Left cardiac atrium (tissue), 4 donors: ENCODE measurements at regions of chr15 and their contacts with region 1.

Region 1: GRCh38 chr15:41387646-41388045 is 14.7 kb downstream of the NDUFAF1 start:
- DNase-seq: no peak
- ATAC-seq: no peak

Region 2: DNA sequence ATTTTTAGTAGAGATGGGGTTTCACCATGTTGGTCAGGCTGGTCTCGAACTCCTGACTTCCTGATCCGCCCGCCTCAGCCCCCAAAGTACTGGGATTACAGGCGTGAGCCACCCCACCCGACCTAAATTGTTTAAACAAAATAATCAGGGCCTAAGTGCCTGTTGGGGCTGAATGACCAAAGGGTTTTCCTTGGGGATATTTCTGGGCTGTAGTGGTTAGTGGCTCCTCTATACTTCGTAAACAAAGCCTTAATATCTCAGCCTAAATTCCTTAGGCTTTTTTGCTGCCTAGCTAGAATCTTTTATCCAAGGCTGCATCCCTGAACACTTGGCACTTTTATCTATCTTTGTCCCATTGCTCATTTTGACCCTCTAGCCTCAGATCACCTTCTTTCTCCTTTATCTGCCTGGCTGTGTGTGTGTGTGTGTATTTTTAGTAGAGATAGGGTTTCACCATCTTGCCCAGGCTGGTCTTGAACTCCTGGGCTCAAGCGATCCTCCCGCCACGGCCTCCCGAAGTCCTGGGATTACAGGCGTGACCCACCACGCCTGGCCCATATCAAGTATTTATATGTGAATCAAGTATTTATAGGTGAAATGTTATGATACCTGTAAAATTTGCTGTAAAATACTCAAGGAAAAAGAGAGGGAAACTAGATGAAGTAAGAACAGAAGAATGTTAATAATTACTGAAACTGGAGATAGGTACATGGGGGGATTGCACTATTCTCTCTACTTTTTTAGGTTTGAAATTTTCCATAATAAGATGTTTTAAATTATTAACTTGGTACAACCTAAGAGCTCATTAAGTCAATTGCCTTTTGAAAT is 53.1 kb before region 1 on chr15:
- intact Hi-C with region 1: loop called in 1 of 2 experiments (anchors 5 kb)
- DNase-seq: no peak
- ATAC-seq: no peak